Heart left ventricle (tissue), 16 donors: ENCODE measurements at regions of chr7 and their contacts with region 1.

Region 1: DNA sequence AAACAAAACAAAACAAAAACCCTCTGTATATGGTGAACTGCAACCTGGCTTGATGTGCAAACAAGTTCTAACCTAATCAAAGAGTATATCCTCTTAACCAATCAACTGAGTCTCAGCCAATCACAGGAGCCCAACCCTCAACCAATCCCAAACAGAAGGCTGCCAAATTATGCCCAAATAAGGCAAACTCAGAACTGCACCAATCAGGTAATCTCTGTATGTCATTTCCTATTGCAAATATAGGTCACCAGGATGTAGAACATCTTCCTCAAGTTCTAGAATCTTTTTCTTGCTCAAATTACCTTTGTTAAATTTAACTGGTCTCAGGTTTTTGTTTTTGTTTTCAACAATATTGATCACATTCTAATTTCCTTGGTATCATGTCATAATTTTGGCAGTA is 5.2 kb downstream of the FAM133B start:
- DNase-seq: no peak
- ATAC-seq: no peak
- H3K4me3 ChIP-seq: no peak overlapping the region
- H3K27ac ChIP-seq: peak overlapping the region in 2 of 12 donors; percentile 2 to 16
- H3K4me1 ChIP-seq: peaks cover 5 to 48% (median 32%) of the 10 kb centered on the region in 12 donors
- H3K27me3 ChIP-seq: no peaks in the 10 kb centered on the region
- CTCF ChIP-seq: no peak
- POLR2A ChIP-seq: no peak

Region 2: DNA sequence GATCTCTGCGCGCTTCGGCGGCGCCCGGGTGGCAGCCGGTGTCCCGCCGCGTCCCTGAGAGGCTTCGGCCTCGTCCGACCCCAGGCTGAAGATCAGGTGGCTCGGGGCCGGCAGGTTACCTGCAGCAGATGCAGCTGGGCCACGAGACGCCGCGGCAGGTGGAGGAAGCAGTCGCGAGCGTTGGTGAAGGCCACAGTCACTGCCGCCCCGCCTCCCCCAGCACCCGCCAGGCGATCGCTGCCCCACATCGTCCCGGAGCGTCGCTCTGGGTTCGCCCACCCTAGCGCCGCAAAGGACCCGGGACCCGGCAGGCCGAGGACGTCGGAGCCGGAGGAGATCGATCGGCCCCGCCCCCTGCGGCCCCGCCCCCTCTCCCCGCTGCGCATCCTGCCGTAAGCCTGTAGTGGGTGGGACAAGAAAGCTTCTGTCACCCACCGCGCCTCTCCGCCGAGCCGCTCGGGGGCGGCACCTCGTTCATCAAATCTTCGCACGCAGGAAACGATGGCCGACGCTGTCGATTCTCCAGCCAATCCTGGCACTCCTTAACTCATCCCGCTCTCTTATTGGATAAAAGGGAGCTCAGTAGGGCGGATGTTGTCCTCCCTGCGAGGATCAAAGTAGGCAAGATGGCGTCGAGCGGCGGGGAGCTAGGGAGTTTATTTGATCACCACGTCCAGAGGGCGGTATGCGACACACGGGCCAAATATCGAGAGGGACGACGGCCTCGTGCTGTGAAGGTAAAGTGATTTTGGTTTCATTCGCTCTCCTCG is 56.6 kb before region 1 on chr7 and contains the starts of genes PEX1 and RBM48:
- intact Hi-C with region 1: loop called in 3 of 10 experiments (anchors 2 to 5 kb)
- DNase-seq: peak; percentile 96 to 97 (median 96)
- ATAC-seq: peak; percentile 98 to 99 (median 99)
- H3K4me3 ChIP-seq: peak within 1 kb of the TSS; percentile 65 to 92 (median 84)
- H3K27ac ChIP-seq: peak within 1 kb of the TSS; percentile 45 to 92 (median 84)
- H3K4me1 ChIP-seq: peaks cover 0 to 41% (median 19%) of the 10 kb centered on the region in 12 donors
- H3K27me3 ChIP-seq: no peaks in the 10 kb centered on the region
- CTCF ChIP-seq: peak in 10 of 12 donors; percentile 28 to 76 (median 56)
- POLR2A ChIP-seq: peak in 1 of 2 donors; percentile 56
- total RNA-seq, gene PEX1: 10.7 to 19.9 (median 15.4) TPM
- total RNA-seq, gene RBM48: 6.5 to 13.7 (median 10.8) TPM

Region 3: DNA sequence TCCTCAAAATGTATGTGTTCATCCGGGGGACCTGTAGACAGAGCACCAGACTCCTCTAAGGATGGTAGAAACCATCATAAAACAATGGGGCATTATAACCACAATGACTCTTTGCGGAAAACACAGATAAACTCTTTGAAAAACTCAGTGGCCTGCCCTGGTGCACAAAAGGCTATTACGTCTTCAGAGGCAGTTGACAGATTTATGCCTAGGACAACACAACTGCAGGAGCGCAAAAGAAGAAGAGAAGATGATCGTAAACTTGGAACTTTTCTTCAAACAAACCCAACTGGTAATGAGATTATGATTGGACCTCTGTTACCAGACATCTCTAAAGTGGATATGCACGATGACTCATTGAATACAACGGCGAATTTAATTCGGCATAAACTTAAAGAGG is 50.4 kb before region 1 on chr7:
- intact Hi-C with region 1: loop called in 3 of 10 experiments (anchors 2 to 5 kb)
- DNase-seq: no peak
- ATAC-seq: no peak
- H3K4me3 ChIP-seq: no peak overlapping the region
- H3K27ac ChIP-seq: no peak overlapping the region
- H3K4me1 ChIP-seq: peaks cover 0 to 21% (median 2%) of the 10 kb centered on the region in 12 donors
- H3K27me3 ChIP-seq: no peaks in the 10 kb centered on the region
- CTCF ChIP-seq: no peak
- POLR2A ChIP-seq: no peak